HEK293 (cell line): ENCODE measurements at regions of chr19 and their contacts with region 1.

Region 1: GRCh38 chr19:29263305-29264135 is 50.6 kb upstream of the UQCRFS1 start:
- H3K4me3 ChIP-seq: no peak overlapping the region
- H3K27ac ChIP-seq: no peak overlapping the region
- H3K4me1 ChIP-seq: no peaks in the 10 kb centered on the region
- CTCF ChIP-seq: peak; percentile 84

Region 2: GRCh38 chr19:28737021-28737895 is 526.3 kb before region 1 on chr19:
- CTCF ChIA-PET with region 1: interaction called, 34 read pairs
- POLR2A ChIA-PET with region 1: no interaction called
- H3K4me3 ChIP-seq: no peak overlapping the region
- H3K27ac ChIP-seq: no peak overlapping the region
- H3K4me1 ChIP-seq: no peaks in the 10 kb centered on the region
- CTCF ChIP-seq: 0 out of 2 replicates have a peak, but pooled peaks have one; percentile 39

Region 3: GRCh38 chr19:29054886-29055675 is 208.4 kb before region 1 on chr19:
- CTCF ChIA-PET with region 1: interaction called, 11 read pairs
- POLR2A ChIA-PET with region 1: no interaction called
- H3K4me3 ChIP-seq: no peak overlapping the region
- H3K27ac ChIP-seq: no peak overlapping the region
- H3K4me1 ChIP-seq: peaks cover 10% of the 10 kb centered on the region
- CTCF ChIP-seq: no peak

Region 4: DNA sequence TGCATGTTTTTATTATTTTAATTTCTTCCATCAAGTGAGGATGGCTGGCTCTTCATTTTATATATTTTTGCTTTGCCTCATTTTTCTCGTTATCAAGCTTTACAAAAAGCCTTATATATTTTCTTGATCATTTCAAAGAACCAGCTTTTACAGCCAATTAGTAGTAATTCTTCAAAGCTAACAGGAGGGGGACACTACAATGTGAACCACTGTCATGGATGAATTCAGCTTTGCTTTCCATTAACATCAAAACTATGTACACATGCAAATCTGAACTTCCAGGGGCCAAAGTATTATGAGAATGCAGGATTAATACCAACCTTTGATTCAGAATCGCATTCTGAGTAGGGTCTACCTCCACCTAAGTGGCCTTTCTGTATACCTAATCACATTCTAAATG is 61.7 kb before region 1 on chr19:
- CTCF ChIA-PET with region 1: interaction called, 22 read pairs
- POLR2A ChIA-PET with region 1: no interaction called
- H3K4me3 ChIP-seq: no peak overlapping the region
- H3K27ac ChIP-seq: no peak overlapping the region
- H3K4me1 ChIP-seq: peaks cover 8% of the 10 kb centered on the region
- CTCF ChIP-seq: peak; percentile 12; the same call in 1 of the 2 replicates

Region 5: DNA sequence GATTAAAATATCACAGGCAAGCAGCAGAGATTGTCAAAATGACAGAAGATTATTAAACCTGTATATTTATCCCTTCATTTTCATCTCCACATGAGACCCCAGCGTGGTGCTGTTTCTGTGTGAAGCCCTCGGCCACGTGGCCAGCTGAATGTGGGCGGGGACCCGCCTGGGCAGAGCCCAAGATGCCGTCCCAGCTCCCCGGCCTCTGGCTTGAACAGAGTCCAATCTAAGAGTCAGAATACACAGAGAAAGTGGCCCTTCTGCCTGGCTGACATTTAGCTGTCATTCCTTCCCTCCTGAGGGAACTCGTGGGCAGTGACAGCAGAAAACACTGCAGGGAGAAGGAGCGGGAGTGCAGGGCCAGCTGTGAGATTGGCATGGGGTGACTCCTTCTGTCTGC is 15.6 kb before region 1 on chr19:
- CTCF ChIA-PET with region 1: interaction called, 60 read pairs
- POLR2A ChIA-PET with region 1: no interaction called
- H3K4me3 ChIP-seq: no peak overlapping the region
- H3K27ac ChIP-seq: no peak overlapping the region
- H3K4me1 ChIP-seq: peaks cover 3% of the 10 kb centered on the region; the same call in 1 of the 2 replicates
- CTCF ChIP-seq: no peak

Region 6: GRCh38 chr19:29278716-29279115 is 15.2 kb after region 1 on chr19:
- CTCF ChIA-PET with region 1: interaction called, 55 read pairs
- POLR2A ChIA-PET with region 1: no interaction called
- H3K4me3 ChIP-seq: no peak overlapping the region
- H3K27ac ChIP-seq: no peak overlapping the region
- H3K4me1 ChIP-seq: no peaks in the 10 kb centered on the region
- CTCF ChIP-seq: no peak

Region 7: DNA sequence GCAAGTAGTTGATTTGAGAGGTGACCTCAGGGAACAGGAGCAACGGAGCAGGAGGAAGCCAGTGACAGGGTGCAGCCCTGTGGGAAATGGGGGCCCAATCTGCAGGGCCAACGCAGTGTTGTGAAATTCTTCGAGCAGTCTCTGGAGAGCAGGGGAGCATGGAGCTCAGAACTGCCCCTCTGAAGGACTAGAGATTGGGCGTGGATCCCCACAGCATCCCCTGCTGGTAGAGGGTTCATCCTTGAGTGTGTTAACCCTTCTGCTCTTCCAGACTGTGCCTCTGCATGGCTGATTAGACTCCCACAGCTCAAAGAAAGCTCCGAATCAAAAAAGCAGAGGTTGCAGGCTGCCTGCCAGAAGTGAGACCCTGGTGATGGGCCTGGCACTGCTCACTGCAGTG is 27.3 kb after region 1 on chr19:
- CTCF ChIA-PET with region 1: interaction called, 10 read pairs
- POLR2A ChIA-PET with region 1: no interaction called
- H3K4me3 ChIP-seq: no peak overlapping the region
- H3K27ac ChIP-seq: no peak overlapping the region
- H3K4me1 ChIP-seq: no peaks in the 10 kb centered on the region
- CTCF ChIP-seq: peak; percentile 52; the same call in 1 of the 2 replicates